Activated CD8-positive, alpha-beta memory T cell treated with anti-CD3 and anti-CD28 coated beads, Interleukin-2, amount 10 ng/mL, durations not matched to agents 7 days and 5 days (primary cell): ENCODE measurements at regions of chr22 and their contacts with region 1.

Region 1: DNA sequence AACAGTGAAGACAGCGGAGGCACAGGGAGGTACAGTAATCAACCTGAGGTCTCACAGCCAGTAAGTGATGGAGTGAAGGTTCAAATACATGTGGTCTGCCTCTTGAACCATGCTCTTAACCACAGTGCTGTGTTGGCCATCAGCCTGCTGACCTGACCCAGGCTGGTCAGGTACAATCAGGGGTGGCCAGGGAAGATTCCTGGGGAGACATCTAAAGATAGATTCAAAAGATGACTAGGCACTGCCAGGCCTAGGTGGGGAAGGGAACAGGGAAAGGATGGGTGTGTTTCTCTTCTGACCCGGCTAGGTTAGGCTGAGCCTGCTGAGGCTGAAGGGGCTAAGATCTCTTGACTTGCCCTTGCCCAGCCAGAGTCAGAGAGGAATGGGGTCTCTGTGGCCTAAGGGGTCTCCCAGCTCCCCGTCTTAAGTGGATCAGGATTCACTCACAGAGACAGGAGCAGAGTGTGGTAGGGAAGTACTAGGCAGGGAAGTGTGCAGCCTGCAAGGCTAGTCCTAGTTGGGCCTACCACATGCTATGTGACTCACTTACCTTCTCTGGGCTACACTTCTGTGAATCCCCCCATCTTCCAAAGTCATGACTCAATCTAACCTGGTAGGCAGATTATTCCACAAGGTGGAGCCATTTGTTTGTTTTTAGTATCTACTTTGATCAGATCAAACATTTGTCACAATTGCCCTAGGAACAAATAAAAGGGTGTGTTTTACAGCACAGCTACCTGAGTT is 10.4 kb upstream of the SREBF2 start:
- DNase-seq: peak; percentile 54
- ATAC-seq: peak; percentile 84
- H3K4me3 Mint-ChIP-seq: no peak overlapping the region
- H3K27ac Mint-ChIP-seq: peak overlapping the region; percentile 73
- H3K4me1 Mint-ChIP-seq: peaks cover 23% of the 10 kb centered on the region
- H3K27me3 Mint-ChIP-seq: no peaks in the 10 kb centered on the region

Region 2: DNA sequence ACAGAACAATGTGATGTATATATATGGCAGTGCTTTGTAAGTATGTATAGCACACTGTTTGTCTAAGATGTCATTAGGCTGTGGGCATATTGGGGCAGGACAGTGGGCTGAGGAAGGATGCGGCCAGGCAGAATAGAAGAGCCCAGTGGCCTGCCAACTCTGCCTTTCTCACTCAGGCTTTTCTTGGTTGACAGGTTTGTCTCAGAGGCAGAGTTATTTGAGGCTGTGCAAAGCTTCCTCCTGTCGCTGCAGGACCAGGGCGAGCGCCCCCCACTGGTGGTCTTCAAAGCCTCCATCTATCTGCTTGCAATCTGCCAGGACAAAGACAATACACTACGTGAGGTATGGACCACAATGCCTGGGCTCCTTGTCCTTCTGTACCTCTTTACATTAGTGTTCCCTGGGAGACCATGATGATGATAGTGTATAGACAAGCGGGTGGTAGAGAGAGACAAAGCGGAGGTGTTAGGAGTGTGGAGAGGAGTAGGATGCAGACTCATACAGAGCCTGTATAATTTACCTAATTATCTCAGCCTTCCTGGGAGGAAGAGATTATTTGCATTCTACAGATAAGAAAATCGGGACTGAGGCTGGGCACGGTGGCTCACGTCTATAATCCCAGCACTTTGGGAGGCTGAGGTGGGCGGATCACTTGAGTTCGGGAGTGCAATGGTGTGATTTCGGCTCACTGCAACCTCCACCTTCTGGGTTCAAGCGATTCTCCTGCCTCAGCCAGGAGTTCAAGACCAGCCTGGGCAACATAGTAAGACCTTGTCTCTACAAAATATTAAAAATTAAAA is 59.3 kb before region 1 on chr22:
- CTCF ChIA-PET with region 1: no interaction called
- DNase-seq: peak; percentile 49
- ATAC-seq: no peak
- H3K4me3 Mint-ChIP-seq: no peak overlapping the region
- H3K27ac Mint-ChIP-seq: no peak overlapping the region
- H3K4me1 Mint-ChIP-seq: peaks cover 3% of the 10 kb centered on the region
- H3K27me3 Mint-ChIP-seq: no peaks in the 10 kb centered on the region

Region 3: DNA sequence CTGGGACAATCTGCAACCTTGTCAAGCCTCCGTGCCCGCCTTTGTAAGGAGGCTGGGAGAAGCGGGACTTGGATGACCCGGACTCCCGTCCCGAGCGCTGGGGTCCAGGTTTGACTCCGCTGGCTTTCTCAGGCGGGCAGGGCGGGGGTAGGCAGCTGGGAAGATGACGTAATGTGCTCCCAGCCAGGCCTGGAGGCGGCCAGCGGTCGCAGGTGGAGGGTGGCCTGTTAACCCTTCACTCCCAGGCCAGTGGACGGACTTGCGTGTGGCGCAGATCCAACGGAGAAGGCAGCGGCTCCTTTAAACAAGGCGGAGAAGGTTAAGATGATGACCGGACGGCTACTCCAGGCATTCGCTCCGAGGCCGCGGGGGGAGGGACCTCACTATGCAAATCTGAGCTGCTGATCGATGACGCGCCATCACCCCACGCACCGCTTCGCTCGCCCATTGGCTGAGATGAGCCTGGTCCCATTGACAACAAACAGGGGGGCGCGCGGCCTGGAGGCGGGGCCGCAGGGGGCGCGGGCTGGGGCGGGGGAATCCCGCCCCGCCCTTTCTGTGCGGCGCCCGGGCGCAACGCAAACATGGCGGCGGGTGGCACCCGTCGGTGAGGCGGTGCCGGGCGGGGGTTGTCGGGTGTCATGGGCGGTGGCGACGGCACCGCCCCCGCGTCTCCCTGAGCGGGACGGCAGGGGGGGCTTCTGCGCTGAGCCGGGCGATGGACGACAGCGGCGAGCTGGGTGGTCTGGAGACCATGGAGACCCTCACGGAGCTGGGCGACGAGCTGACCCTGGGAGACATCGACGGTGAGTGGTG is 10.3 kb after region 1 on chr22 and contains the start of gene SREBF2:
- CTCF ChIA-PET with region 1: interaction called, 13 read pairs
- DNase-seq: peak; percentile 100
- ATAC-seq: peak; percentile 95
- H3K4me3 Mint-ChIP-seq: peak within 1 kb of the TSS; percentile 82
- H3K27ac Mint-ChIP-seq: peak within 1 kb of the TSS; percentile 99
- H3K4me1 Mint-ChIP-seq: peaks cover 44% of the 10 kb centered on the region
- H3K27me3 Mint-ChIP-seq: no peaks in the 10 kb centered on the region
- total RNA-seq, gene SREBF2: 130 to 135 TPM

Region 4: DNA sequence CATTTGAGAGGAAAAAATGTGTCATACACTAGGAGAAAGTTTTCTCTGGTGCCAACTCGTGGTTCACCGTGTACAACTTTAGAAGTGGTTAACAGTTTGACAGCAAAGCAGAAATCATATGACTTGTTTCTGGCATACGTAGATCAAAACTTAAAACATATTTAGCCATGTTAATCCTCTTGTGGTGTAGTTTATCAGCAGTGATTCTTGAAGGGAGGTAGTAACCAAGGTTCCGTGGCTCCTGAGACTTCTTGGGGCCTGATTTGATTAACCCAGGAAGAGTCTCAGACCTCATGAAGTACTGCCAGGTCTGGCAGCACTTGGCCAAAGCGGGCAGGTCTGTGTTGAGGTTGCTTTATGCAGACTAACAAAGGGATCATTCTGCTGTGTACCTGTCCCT is 50.9 kb after region 1 on chr22:
- CTCF ChIA-PET with region 1: no interaction called
- DNase-seq: no peak
- ATAC-seq: peak; percentile 45
- H3K4me3 Mint-ChIP-seq: no peak overlapping the region
- H3K27ac Mint-ChIP-seq: peak overlapping the region; percentile 10
- H3K4me1 Mint-ChIP-seq: peaks cover 14% of the 10 kb centered on the region
- H3K27me3 Mint-ChIP-seq: no peaks in the 10 kb centered on the region